GM10248 (cell line): ENCODE measurements at regions of chr6 and their contacts with region 1.

Region 1: DNA sequence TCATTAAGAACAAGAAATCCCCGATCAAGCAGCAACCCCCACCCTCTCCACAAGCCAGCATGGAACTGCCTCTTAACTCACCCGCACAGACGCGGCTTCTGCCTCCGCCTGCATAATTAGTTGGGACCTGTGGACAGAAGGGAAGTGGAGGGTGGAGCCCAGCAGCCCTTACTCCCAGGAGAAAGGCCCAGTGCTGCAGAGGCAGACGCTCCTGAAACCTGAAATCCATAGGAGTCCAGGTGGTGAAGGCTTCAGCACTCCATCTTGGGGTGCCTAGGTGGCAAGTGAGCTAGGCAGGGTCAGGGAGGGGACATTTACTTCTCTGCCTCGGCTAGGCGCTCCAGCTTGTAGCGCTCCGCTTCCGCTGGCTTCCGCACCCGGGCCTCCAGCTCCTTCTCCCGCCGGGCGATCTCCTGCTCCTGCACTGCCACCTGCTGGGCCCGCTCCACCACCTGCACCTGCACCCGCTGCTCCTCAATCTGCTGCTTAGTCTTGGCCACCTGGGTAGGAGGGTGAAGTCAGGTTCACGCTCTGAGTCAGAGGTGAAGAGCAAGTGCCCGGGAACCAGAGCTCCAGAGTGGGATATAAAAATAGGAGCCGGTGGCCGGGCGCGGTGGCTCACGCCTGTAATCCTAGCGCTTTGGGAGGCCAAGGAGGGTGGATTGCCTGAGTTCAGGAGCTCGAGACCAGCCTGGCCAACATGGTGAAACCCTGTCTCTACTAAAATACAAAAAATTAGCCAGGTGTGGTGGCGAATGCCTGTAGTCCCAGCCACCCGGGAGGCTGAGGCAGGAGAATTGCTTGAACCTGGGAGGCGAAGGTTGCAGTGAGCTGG is 10.7 kb downstream of the TUBB start:
- DNase-seq: peak; percentile 78
- CTCF ChIP-seq: peak; percentile 98

Region 2: DNA sequence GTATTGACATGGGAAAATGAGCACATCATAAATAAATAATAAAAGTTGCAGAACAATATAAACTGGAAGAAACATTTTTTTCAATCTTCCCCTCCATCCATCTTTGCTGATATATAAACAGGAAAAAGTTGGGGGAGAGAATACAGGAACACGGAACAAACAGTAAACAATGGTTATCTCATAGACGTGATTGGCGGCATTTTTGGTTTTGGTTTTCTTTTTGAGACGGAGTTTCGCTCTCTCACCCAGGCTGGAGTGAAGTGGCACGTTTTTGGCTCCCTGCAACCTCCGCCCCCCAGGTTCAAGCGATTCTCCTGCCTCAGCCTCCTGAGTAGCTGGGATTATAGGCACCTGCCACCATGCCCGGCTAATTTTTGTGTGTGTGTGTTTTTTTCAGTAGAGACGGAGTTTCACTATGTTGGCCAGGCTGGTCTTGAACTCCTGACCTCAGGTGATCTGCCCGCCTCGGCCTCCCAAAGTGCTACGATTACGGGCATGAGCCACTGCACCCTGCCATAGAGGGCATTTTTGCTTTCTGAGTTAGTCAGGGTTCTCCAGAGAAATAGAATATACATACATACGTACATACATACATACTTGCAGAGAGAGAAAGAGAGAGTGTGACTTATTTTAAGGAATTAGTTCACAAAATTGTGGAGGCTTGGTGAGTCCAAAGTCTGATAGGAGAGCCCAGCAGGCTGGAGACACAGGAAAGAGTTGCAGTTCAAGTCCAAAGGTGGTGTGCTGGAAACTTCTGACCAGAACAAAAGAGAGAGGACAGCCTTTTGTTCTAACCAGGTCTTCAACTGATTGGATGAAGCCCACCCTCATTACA is 197.1 kb before region 1 on chr6:
- CTCF ChIA-PET with region 1: interaction called, 10 read pairs
- POLR2A ChIA-PET with region 1: no interaction called
- DNase-seq: no peak
- CTCF ChIP-seq: no peak

Region 3: GRCh38 chr6:30590994-30591393 is 139.8 kb before region 1 on chr6:
- CTCF ChIA-PET with region 1: interaction called, 12 read pairs
- POLR2A ChIA-PET with region 1: no interaction called
- DNase-seq: no peak
- CTCF ChIP-seq: no peak

Region 4: GRCh38 chr6:30686908-30687658 is 43.7 kb before region 1 on chr6:
- CTCF ChIA-PET with region 1: interaction called, 776 read pairs
- POLR2A ChIA-PET with region 1: no interaction called
- DNase-seq: peak; percentile 90
- CTCF ChIP-seq: no peak

Region 5: GRCh38 chr6:30741063-30741779 is 10.4 kb after region 1 on chr6:
- CTCF ChIA-PET with region 1: interaction called, 18 read pairs
- POLR2A ChIA-PET with region 1: interaction called, 4 read pairs
- DNase-seq: no peak
- CTCF ChIP-seq: no peak

Region 6: GRCh38 chr6:30759575-30760239 is 28.9 kb after region 1 on chr6:
- CTCF ChIA-PET with region 1: interaction called, 11 read pairs
- POLR2A ChIA-PET with region 1: no interaction called
- DNase-seq: no peak
- CTCF ChIP-seq: no peak

Region 7: DNA sequence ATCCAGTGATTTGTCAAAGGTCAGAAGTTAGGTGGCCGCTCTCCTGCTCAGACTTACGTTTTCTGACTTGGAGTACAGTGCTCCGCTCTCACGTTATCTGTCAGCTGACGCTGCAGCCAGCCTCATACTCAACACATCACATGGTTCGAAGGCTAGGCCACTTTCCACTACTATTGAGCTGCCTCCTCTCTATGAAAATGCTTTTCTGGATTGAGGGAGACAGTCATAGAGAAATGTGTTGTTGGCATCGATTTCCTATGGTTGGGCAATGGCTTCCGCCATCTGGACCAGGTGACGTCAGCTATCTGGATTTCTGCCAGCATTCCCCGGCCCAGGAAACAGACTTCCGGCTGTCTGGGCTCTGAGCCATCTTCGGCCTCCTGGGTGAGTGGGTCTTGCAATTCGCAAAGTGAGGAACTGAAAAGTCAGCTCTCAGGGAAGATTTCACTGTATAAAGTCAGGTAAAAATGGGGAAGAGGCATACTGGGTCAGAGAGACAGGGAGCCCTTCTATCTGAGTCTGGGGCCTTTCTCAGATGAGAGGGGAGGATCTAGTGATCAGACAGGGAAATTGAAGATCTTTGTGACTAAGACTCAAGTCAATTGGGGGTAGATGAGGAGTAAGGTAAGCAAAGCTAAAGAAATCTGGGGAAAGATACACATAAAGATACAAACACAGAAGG is 51.1 kb after region 1 on chr6:
- CTCF ChIA-PET with region 1: no interaction called
- POLR2A ChIA-PET with region 1: no interaction called
- DNase-seq: no peak
- CTCF ChIP-seq: no peak

Region 8: DNA sequence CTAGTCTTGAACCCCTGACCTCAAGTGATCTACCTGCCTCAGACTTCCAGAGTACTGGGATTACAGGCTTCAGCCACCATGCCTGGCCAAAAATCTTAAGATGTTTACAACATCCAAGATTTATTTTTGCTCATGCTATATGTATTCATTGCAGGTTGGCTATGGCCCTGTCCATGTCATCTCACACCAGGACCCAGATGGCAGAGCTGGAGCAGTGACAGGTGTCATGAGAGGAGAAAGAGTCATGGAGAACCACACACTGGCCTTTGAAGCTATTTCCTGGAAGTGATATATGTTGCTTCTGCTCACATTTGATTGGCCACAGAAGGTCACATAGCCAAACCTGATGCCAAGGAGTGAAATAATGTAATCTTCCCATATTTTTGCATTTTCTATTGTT is 139.7 kb after region 1 on chr6:
- CTCF ChIA-PET with region 1: no interaction called
- POLR2A ChIA-PET with region 1: no interaction called
- DNase-seq: no peak
- CTCF ChIP-seq: no peak

Region 9: DNA sequence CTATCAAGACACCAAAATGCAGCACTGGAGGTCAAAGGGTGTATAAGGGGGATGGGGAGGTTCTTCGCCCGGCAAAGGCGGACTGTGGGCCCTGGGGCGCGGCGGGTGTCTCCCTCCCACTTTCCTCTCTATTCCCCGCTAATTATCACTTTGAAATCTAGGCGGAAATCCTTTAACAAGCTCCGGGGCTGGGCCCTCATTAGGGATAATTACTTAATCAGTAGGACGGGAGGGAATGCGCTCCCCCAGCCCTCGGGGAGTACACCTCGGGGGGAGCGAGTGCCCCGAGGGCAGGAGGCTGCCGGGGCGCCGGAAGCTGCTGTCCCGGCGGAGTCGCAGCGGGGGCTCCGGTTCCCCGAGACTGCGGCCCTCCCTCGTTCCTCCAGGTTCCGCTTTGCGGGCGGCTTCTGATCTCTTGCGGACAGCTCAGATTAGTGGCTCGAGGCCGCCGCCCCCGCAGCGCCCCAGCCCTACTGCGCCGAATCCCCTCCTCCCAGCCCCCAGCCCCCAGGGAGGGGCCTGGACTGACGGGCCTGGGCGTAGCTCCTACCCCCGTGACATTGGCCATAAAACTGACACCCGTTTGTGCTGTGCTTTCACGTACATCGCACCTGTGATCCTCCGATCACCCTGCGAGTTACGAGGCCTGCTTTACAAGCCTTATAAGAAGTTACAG is 224.7 kb after region 1 on chr6:
- CTCF ChIA-PET with region 1: no interaction called
- POLR2A ChIA-PET with region 1: no interaction called
- DNase-seq: peak; percentile 82
- CTCF ChIP-seq: no peak

Region 10: GRCh38 chr6:31079656-31080261 is 348.9 kb after region 1 on chr6:
- CTCF ChIA-PET with region 1: interaction called, 10 read pairs
- POLR2A ChIA-PET with region 1: no interaction called
- DNase-seq: peak; percentile 69
- CTCF ChIP-seq: peak; percentile 78